ENCODE measurements at regions of chr13 and their contacts with region 1.

Region 1: DNA sequence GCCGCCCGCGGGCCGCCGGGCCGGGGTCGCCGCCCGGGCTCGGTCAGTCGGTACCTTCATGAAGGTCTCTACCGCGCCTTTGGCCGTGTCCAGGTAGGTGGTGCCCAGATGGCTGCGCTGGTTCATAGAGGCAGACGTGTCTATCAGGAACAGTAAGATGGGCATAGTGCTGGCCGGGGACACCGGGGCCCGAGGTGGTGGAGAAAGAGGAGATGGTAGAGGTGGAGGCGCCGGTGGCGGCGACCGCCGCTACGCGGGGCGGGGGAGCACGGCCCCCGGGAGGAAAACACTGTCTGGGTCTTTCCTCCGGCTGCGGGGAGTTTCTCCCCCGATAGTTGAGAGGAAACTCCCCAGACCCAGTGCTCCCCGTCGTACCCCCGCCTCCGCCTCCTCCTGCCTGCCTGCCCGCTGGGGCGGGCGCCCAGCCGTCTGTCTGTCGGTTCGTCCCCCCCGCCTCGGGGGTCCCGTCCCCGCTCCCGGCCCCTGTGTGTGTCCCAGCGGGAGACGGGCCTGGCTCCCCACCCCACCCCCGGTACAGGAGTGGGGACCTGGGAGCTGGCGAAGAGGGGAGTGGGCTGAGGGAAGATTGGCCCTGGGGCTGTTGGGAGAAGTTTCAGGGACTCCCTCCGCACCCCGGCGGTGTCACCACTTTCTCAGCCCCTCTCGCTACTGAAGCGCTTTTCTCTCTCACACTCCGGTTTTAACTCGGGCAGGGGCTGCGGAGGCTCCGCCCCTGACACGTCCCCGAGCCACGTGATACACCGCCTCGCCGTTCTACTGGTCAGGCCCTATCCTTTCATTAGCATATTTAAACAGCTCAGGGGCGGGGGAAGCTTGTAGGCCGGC is at the start of gene INTS6:
- DNase-seq: peak; percentile 98 to 99 (median 99)
- ATAC-seq: peak; percentile 83
- H3K4me3 ChIP-seq: peak within 1 kb of the TSS; percentile 83 to 93
- H3K4me3 Mint-ChIP-seq: peak within 1 kb of the TSS; percentile 97
- H3K27ac ChIP-seq: peak within 1 kb of the TSS; percentile 91 to 94
- H3K27ac Mint-ChIP-seq: peak within 1 kb of the TSS; percentile 99
- H3K4me1 ChIP-seq: peaks cover 31% of the 10 kb centered on the region
- H3K4me1 Mint-ChIP-seq: peaks cover 55% of the 10 kb centered on the region
- H3K27me3 ChIP-seq: no peaks in the 10 kb centered on the region
- H3K27me3 Mint-ChIP-seq: no peaks in the 10 kb centered on the region
- CTCF ChIP-seq: no peak
- total RNA-seq, gene INTS6: 49.5 to 50.0 TPM

Region 2: GRCh38 chr13:49996951-49997895 is 1455.4 kb before region 1 on chr13 and contains the start of gene TRIM13:
- CTCF ChIA-PET with region 1: no interaction called
- POLR2A ChIA-PET with region 1: no interaction called
- intact Hi-C with region 1: loop called in 1 of 2 experiments (anchors 2 kb)
- DNase-seq: peak; percentile 72 to 90 (median 81)
- ATAC-seq: peak; percentile 80
- H3K4me3 ChIP-seq: peak within 1 kb of the TSS; percentile 87 to 99
- H3K4me3 Mint-ChIP-seq: peak within 1 kb of the TSS; percentile 86
- H3K27ac ChIP-seq: peak within 1 kb of the TSS; percentile 84 to 85
- H3K27ac Mint-ChIP-seq: peak within 1 kb of the TSS; percentile 86
- H3K4me1 ChIP-seq: peaks cover 27% of the 10 kb centered on the region
- H3K4me1 Mint-ChIP-seq: peaks cover 49% of the 10 kb centered on the region
- H3K27me3 ChIP-seq: no peaks in the 10 kb centered on the region
- H3K27me3 Mint-ChIP-seq: no peaks in the 10 kb centered on the region
- CTCF ChIP-seq: peak; percentile 78
- total RNA-seq, gene TRIM13: 24.0 to 24.4 TPM

Region 3: DNA sequence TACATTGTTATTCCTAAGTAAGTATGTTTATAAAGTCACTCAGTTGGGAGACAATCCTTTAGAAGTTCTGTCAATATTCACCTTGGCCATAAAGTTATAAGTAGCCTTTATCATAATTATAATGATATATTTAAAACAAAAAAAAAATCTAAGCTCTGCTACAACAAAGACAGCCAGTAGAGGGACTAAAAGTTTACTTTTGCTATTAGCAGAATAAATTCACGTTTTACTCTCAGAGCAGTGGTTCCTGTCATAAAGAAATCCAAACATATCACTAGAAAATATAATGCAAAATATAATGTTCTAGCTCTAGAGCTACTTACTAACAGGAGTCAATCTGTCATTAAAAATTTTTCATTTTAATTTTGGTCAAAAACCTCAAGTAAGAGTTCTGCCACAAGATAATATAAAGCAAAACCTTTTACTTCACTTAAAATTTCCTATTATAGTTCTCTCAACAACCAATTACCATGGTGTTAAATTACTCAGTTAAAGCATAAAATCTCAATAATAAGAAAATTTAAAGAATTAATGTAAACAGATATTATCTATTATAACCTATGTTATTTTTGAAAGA is 17.5 kb before region 1 on chr13:
- CTCF ChIA-PET with region 1: interaction called, 4 read pairs
- POLR2A ChIA-PET with region 1: interaction called, 8 read pairs
- intact Hi-C with region 1: loop called in 1 of 2 experiments (anchors 2 kb)
- DNase-seq: peak in 2 of 9 experiments; percentile 39 to 60
- ATAC-seq: peak; percentile 57
- H3K4me3 ChIP-seq: no peak overlapping the region
- H3K4me3 Mint-ChIP-seq: no peak overlapping the region
- H3K27ac ChIP-seq: no peak overlapping the region
- H3K27ac Mint-ChIP-seq: no peak overlapping the region
- H3K4me1 ChIP-seq: peaks cover 3% of the 10 kb centered on the region
- H3K4me1 Mint-ChIP-seq: peaks cover 23% of the 10 kb centered on the region
- H3K27me3 ChIP-seq: no peaks in the 10 kb centered on the region
- H3K27me3 Mint-ChIP-seq: no peaks in the 10 kb centered on the region
- CTCF ChIP-seq: peak; percentile 87

Region 4: GRCh38 chr13:51632591-51633362 is 180.2 kb after region 1 on chr13:
- CTCF ChIA-PET with region 1: no interaction called
- POLR2A ChIA-PET with region 1: no interaction called
- intact Hi-C with region 1: no loop called
- DNase-seq: no peak
- ATAC-seq: no peak
- H3K4me3 ChIP-seq: no peak overlapping the region
- H3K4me3 Mint-ChIP-seq: no peak overlapping the region
- H3K27ac ChIP-seq: no peak overlapping the region
- H3K27ac Mint-ChIP-seq: peak overlapping the region; percentile 6
- H3K4me1 ChIP-seq: peaks cover 16% of the 10 kb centered on the region
- H3K4me1 Mint-ChIP-seq: peaks cover 59% of the 10 kb centered on the region
- H3K27me3 ChIP-seq: no peaks in the 10 kb centered on the region
- H3K27me3 Mint-ChIP-seq: no peaks in the 10 kb centered on the region
- CTCF ChIP-seq: no peak

Region 5: DNA sequence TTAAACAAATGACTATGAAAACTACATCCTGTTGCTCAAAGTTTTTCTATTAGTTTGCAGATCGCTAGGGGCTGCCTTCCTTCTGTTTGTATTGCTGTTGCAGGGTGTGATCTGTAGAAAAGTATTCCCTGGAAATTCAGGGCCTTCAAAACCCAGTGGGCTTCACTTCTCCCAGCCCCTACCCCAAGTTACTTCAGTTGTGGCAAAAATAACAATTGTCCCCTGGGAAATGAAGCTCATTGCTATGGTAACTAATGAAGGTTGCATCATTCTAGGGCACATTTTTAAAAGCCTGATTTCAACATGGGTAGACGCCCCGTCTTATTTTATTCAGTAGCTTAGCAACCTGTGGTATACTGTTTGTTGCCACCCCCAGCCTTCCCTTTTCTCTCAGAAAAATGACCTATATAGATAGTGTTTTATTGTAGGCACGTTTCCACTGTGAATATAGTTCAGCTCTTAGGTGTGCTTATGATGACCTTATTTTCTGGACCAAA is 192.6 kb after region 1 on chr13:
- CTCF ChIA-PET with region 1: no interaction called
- POLR2A ChIA-PET with region 1: interaction called, 15 read pairs
- intact Hi-C with region 1: loop called in 1 of 2 experiments (anchors 2 kb)
- DNase-seq: peak in 4 of 9 experiments; percentile 37 to 80 (median 62)
- ATAC-seq: peak; percentile 81
- H3K4me3 ChIP-seq: no peak overlapping the region
- H3K4me3 Mint-ChIP-seq: peak overlapping the region; percentile 52
- H3K27ac ChIP-seq: peak overlapping the region; percentile 66 to 71
- H3K27ac Mint-ChIP-seq: peak overlapping the region; percentile 96
- H3K4me1 ChIP-seq: peaks cover 44% of the 10 kb centered on the region
- H3K4me1 Mint-ChIP-seq: peaks cover 50% of the 10 kb centered on the region
- H3K27me3 ChIP-seq: no peaks in the 10 kb centered on the region
- H3K27me3 Mint-ChIP-seq: no peaks in the 10 kb centered on the region
- CTCF ChIP-seq: no peak

Region 6: GRCh38 chr13:51803422-51804294 is 351.1 kb after region 1 on chr13 and contains the start of gene DHRS12:
- CTCF ChIA-PET with region 1: interaction called, 5 read pairs
- POLR2A ChIA-PET with region 1: interaction called, 30 read pairs
- intact Hi-C with region 1: loop called (anchors 1 kb)
- DNase-seq: peak; percentile 75 to 97 (median 88)
- ATAC-seq: peak; percentile 71
- H3K4me3 ChIP-seq: peak within 1 kb of the TSS; percentile 77 to 79
- H3K4me3 Mint-ChIP-seq: peak within 1 kb of the TSS; percentile 92
- H3K27ac ChIP-seq: peak within 1 kb of the TSS; percentile 97 to 99
- H3K27ac Mint-ChIP-seq: peak within 1 kb of the TSS; percentile 100
- H3K4me1 ChIP-seq: peaks cover 39% of the 10 kb centered on the region
- H3K4me1 Mint-ChIP-seq: peaks cover 55% of the 10 kb centered on the region
- H3K27me3 ChIP-seq: no peaks in the 10 kb centered on the region
- H3K27me3 Mint-ChIP-seq: no peaks in the 10 kb centered on the region
- CTCF ChIP-seq: no peak
- total RNA-seq, gene DHRS12: 13.4 to 14.1 TPM

Region 7: DNA sequence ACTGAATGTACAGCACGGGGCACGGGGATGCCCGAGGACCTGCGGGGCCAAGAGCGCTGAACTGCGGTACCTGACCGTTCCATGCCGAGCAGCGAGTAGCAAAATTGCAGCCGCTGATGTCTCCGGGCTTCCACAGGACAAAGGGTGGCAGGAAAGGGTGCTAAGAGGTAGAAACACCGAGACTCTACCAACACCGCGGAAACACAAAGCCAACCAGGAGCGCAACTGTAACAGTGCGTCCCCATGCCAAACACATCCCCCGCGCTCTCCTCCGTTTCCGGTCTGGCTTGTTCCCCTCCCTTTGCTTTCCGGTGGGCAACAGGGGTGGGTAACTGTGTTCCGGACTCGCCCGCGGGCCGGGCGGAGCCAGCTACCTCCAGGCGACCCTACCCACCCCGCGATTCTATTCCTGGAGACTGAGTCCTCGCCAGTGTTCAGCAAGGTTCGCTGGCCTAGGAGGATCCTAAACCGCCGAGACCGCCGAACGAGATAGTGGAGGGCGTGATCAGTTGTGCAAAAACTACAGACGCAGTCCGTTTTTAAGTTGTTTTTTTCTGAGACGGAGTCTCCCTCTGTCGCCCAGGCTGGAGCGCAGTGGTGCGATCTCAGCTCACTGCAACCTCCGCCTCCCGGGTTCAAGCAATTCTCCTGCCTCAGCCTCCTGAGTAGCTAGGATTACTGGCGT is 741.7 kb after region 1 on chr13:
- CTCF ChIA-PET with region 1: no interaction called
- POLR2A ChIA-PET with region 1: interaction called, 6 read pairs
- intact Hi-C with region 1: loop called (anchors 2 to 5 kb)
- DNase-seq: peak; percentile 81 to 95 (median 86)
- ATAC-seq: peak; percentile 85
- H3K4me3 ChIP-seq: peak overlapping the region; percentile 76 to 87
- H3K4me3 Mint-ChIP-seq: peak overlapping the region; percentile 98
- H3K27ac ChIP-seq: peak overlapping the region; percentile 64 to 65
- H3K27ac Mint-ChIP-seq: peak overlapping the region; percentile 98
- H3K4me1 ChIP-seq: peaks cover 16% of the 10 kb centered on the region
- H3K4me1 Mint-ChIP-seq: peaks cover 39% of the 10 kb centered on the region
- H3K27me3 ChIP-seq: no peaks in the 10 kb centered on the region
- H3K27me3 Mint-ChIP-seq: no peaks in the 10 kb centered on the region
- CTCF ChIP-seq: no peak